CD8-positive, alpha-beta memory T cell (primary cell): ENCODE measurements at regions of chr1 and their contacts with region 1.

Region 1: GRCh38 chr1:200938955-200939354 is 44.3 kb downstream of the INAVA start:
- DNase-seq: peak in 2 of 5 donors; percentile 2 to 27
- H3K4me3 ChIP-seq: no peak overlapping the region
- H3K4me3 Mint-ChIP-seq: no peak overlapping the region
- H3K27ac ChIP-seq: no peak overlapping the region
- H3K27ac Mint-ChIP-seq: no peak overlapping the region
- H3K4me1 ChIP-seq: no peaks in the 10 kb centered on the region
- H3K4me1 Mint-ChIP-seq: peaks cover 3 to 10% (median 7%) of the 10 kb centered on the region in 3 donors
- H3K27me3 ChIP-seq: no peaks in the 10 kb centered on the region
- H3K27me3 Mint-ChIP-seq: no peaks in the 10 kb centered on the region

Region 2: DNA sequence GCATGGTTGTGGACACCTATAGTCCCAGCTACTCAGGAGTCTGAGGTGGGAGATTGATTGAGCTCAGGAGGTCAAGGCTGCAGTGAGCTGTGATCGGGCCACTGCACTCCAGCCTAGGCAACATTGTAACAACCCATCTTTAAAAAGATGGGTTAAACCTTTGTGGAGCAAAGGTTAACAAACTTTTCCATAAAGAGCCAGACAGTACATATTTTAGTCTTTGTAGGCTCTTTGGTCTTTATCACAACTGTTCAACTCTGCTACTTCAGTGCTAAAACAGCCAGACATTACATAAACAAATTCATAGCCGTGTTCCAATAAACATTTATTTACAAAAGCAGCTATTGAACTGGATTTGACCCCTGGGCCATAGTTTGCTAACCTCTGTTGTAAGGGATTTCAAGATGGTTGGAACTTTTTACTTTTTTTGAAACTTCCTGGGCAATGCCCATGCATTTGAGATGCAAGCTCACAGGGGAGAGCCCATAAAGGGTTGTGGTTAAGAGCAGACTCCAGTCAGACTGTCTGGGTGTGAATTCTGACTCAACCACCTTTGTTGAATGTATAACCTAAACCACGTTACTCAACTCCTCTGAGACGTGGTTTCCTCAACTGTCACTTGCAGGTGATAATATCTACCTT is 33.4 kb before region 1 on chr1:
- CTCF ChIA-PET with region 1: no interaction called
- POLR2A ChIA-PET with region 1: no interaction called
- DNase-seq: peak in 4 of 5 donors; percentile 18 to 76 (median 54)
- H3K4me3 ChIP-seq: no peak overlapping the region
- H3K4me3 Mint-ChIP-seq: peak overlapping the region in 2 of 7 donors; percentile 11 to 57
- H3K27ac ChIP-seq: no peak overlapping the region
- H3K27ac Mint-ChIP-seq: peak overlapping the region in 7 of 8 donors; percentile 17 to 89 (median 63)
- H3K4me1 ChIP-seq: peaks cover 14% of the 10 kb centered on the region
- H3K4me1 Mint-ChIP-seq: peaks cover 16 to 44% (median 25%) of the 10 kb centered on the region in 3 donors
- H3K27me3 ChIP-seq: no peaks in the 10 kb centered on the region
- H3K27me3 Mint-ChIP-seq: peaks cover 10 to 11% of the 10 kb centered on the region in 2 donors

Region 3: GRCh38 chr1:200917291-200917817 is 21.6 kb before region 1 on chr1:
- CTCF ChIA-PET with region 1: no interaction called
- POLR2A ChIA-PET with region 1: interaction called, 10 read pairs
- DNase-seq: no peak
- H3K4me3 ChIP-seq: no peak overlapping the region
- H3K4me3 Mint-ChIP-seq: no peak overlapping the region
- H3K27ac ChIP-seq: no peak overlapping the region
- H3K27ac Mint-ChIP-seq: no peak overlapping the region
- H3K4me1 ChIP-seq: no peaks in the 10 kb centered on the region
- H3K4me1 Mint-ChIP-seq: no peaks in the 10 kb centered on the region
- H3K27me3 ChIP-seq: no peaks in the 10 kb centered on the region
- H3K27me3 Mint-ChIP-seq: peaks cover 4 to 6% of the 10 kb centered on the region in 2 donors

Region 4: GRCh38 chr1:200923601-200924000 is 15.4 kb before region 1 on chr1:
- CTCF ChIA-PET with region 1: no interaction called
- POLR2A ChIA-PET with region 1: interaction called, 13 read pairs
- DNase-seq: no peak
- H3K4me3 ChIP-seq: no peak overlapping the region
- H3K4me3 Mint-ChIP-seq: no peak overlapping the region
- H3K27ac ChIP-seq: no peak overlapping the region
- H3K27ac Mint-ChIP-seq: no peak overlapping the region
- H3K4me1 ChIP-seq: no peaks in the 10 kb centered on the region
- H3K4me1 Mint-ChIP-seq: peaks cover 2 to 6% (median 4%) of the 10 kb centered on the region in 3 donors
- H3K27me3 ChIP-seq: no peaks in the 10 kb centered on the region
- H3K27me3 Mint-ChIP-seq: peaks cover 0 to 2% of the 10 kb centered on the region in 2 donors